ENCODE measurements at regions of chr16 and their contacts with region 1.

Region 1: GRCh38 chr16:73956587-73957494 is 339.8 kb upstream of the PSMD7 start:
- DNase-seq: peak; percentile 66
- ATAC-seq: no peak
- H3K4me3 Mint-ChIP-seq: no peak overlapping the region
- H3K27ac Mint-ChIP-seq: no peak overlapping the region
- H3K4me1 Mint-ChIP-seq: no peaks in the 10 kb centered on the region
- H3K27me3 Mint-ChIP-seq: peaks cover 1% of the 10 kb centered on the region
- CTCF ChIP-seq: peak; percentile 90

Region 2: GRCh38 chr16:73976644-73977043 is 19.8 kb after region 1 on chr16:
- CTCF ChIA-PET with region 1: no interaction called
- POLR2A ChIA-PET with region 1: no interaction called
- intact Hi-C with region 1: no loop called
- DNase-seq: no peak
- ATAC-seq: no peak
- H3K4me3 Mint-ChIP-seq: no peak overlapping the region
- H3K27ac Mint-ChIP-seq: no peak overlapping the region
- H3K4me1 Mint-ChIP-seq: no peaks in the 10 kb centered on the region
- H3K27me3 Mint-ChIP-seq: no peaks in the 10 kb centered on the region
- CTCF ChIP-seq: no peak

Region 3: DNA sequence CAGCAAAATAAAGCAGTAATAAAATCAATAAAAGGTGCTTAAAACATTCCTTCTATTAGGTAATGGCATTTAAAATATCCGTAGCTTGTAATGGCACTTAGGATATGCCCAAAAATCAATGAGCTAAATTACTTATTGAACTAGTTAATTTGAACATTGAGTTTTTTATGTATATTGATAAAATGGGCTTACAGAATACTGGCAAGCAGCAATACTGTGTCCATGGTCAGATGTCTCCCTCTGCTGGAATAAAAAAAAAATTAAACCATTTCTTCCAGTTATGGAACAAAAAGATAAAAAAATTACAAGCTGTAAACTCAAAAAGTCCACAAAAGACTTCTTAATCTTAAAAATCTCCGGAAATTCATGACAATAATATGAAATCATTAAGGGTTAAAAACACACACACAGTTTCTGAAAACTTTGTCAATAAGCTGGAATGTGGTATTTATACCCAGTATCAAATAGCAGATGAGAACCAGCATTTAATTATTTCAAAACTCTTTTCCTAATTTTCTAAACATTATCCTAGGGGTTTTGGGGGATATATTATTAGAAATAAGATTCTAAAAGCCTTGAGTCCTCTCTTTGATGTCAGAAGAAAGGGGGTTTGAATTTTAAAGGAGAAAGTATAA is 318.3 kb after region 1 on chr16:
- CTCF ChIA-PET with region 1: interaction called, 10 read pairs
- POLR2A ChIA-PET with region 1: no interaction called
- intact Hi-C with region 1: no loop called
- DNase-seq: no peak
- ATAC-seq: no peak
- H3K4me3 Mint-ChIP-seq: no peak overlapping the region
- H3K27ac Mint-ChIP-seq: no peak overlapping the region
- H3K4me1 Mint-ChIP-seq: no peaks in the 10 kb centered on the region
- H3K27me3 Mint-ChIP-seq: peaks cover 9% of the 10 kb centered on the region
- CTCF ChIP-seq: peak; percentile 57

Measured in activated CD8-positive, alpha-beta T cell treated with anti-CD3 and anti-CD28 coated beads for 36 hours (primary cell).